GM10248 (cell line): ENCODE measurements at regions of chr22 and their contacts with region 1.

Region 1: DNA sequence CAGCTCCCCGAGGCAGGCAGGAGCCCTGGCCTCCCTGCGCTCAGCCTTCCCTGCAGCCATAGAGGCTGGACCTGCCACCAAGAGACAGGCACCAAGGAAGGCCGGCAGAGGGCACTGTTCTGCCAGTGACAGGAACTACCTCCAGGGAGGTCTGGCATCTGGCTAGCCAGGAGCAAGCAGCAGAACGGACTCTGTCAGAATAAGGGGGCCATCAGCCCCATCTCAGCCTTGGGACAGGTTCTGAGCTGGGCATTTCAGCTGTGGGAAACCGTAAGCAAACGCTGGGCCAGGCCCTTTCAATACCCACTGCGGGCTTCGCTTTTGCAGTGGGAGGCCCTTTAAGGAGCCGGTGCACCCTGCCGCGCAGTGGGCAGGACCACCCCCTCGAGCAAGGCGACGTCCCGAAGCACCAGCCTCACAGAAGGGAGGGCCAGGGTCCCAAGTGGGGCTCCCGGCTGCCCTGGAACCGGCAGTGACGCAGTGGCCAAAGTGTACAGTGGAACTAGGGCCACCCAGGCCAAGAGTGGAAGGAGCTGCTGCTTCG is 18.2 kb downstream of the IFT27 start:
- DNase-seq: peak; percentile 82
- CTCF ChIP-seq: peak; percentile 83

Region 2: DNA sequence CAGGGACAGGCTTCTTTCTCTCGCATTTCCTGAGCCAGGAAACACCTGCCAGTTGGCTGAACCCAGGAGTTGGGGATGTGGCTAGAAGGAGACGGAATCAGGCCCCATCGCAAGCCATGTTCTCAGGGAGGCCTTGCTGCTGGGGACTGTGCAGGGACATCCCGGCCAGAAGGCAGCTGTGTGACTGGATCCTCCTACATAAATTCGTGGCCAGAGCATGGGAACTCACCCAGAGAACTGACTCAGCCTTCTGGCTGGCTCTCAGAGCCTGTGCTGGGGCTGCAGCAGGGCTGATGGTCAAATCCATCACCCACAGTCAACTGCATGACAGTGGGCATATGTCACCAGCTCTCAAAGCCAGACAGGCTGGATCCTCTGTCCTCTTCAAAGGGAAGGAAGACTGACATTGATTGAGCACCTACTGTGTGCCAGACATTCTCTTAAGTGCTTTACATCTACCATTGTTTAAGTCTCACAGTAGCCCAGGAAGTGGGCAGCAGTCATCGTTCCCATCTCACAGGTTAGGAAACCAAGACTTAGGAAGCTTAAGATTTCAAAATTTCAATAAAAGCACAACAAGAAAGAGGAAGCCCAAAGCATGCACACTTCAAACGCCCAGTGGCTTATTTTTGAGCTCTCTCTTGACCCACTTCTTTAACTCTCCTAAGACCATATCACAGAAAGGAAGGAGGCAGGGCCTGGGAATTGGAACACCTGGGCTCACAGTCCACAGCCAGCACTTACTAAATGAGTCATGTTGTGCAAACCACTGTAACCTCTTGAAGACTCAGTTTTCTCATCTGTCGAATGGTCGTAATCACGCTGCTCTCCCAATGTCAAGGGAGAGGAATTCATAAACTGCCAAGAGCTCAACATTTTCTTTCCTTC is 23.3 kb before region 1 on chr22:
- CTCF ChIA-PET with region 1: interaction called, 20 read pairs
- POLR2A ChIA-PET with region 1: no interaction called
- DNase-seq: peak; percentile 67
- CTCF ChIP-seq: no peak

Region 3: GRCh38 chr22:36741204-36741793 is 16.4 kb before region 1 on chr22:
- CTCF ChIA-PET with region 1: interaction called, 67 read pairs
- POLR2A ChIA-PET with region 1: no interaction called
- DNase-seq: no peak
- CTCF ChIP-seq: no peak

Region 4: GRCh38 chr22:36775964-36776669 is 18.4 kb after region 1 on chr22 and contains the start of gene IFT27:
- CTCF ChIA-PET with region 1: interaction called, 164 read pairs
- POLR2A ChIA-PET with region 1: no interaction called
- DNase-seq: peak; percentile 100
- CTCF ChIP-seq: no peak

Region 5: DNA sequence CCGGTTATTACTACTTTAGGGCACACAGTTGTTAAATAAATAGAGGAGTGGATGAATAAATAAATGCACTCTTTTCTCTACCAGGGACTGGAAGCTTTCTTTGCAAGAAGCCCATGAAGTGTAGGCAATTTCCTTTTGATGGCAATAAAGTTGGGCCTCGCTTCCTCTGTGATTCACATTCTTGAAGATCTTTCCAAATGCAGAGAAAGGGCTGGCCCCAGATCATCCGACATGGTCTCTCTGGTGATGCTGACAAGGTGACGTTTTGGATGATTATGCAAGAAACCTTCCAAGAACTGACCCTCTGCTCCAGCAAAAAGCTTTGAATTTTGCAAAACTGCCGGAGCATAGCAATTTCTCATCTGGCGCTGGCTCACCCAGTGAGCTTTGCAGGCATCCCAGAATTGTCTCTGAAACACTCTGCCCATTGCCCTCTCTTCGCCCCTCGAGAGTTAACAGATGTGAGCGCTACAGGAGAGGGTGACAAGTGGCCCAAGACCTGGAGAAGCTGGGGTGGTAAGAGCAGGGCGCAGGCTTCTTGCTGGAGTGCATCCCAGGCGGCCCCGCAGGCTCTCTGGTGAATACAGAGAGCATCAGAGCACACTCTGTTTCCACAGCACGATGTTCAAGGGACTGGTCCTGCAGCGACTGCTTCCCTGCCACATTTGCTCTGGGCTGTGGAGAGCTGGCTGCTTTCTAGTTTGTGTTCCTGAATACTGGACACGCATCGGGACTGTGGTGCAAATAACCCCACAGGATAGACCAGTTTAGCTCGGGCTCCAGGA is 29.7 kb after region 1 on chr22:
- CTCF ChIA-PET with region 1: interaction called, 164 read pairs
- POLR2A ChIA-PET with region 1: no interaction called
- DNase-seq: no peak
- CTCF ChIP-seq: no peak